Activated T-helper 2 cell treated with anti-CD3 and anti-CD28 coated beads, Interferon-gamma antibody, Interleukin-2, Interleukin-4, amounts not matched to agents 10 μg/mL and 5 μg/mL and 100 μg/mL, durations not matched to agents 14 hours and 24 hours and 36 hours (primary cell): ENCODE measurements at regions of chr1 and their contacts with region 1.

Region 1: DNA sequence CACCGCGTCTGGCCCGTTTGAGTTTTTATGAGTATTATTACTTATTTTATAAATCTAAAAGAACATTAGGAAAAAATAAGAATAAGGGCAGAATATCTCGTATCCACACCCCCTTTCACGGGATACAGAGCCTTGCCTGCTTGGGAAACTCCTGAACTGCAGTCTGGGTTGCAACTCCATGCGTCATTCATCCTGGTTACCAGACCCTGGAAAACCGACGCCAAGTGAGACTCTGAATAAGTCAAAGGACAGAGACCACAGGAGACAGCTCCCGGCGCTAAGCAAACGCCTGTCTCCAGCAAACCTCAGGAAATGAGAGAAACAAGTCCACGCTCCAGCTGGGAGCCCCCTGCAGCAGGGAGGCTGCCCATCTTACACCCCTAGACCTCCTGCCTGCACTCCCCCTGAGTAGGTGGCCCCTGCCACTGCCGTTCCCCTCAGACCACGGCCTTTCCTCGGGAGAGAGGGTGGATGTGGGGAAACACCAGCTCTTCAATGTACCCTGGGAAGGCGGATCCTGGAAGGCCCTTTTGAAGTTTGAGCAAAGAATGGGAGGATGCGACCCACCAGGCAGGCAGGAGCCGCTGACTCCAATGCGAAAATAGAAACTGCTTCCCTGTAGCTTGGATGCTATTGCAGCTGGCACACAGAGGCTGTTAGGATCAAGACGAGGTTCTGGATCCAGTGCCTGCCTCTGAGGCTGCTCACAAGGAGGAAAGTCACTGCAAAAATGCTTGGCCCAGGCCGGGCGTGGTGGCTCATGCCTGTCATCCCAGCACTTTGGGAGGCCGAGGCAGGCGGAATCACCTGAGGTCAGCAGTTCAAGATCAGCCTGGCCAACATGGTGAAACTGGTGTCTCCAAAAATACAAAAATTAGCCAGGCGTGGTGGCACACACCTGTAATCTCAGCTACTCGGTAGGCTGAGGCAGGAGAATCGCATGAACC is 37.7 kb upstream of the GPR157 start:
- DNase-seq: no peak
- H3K4me3 Mint-ChIP-seq: no peak overlapping the region
- H3K27ac Mint-ChIP-seq: no peak overlapping the region
- H3K4me1 Mint-ChIP-seq: peaks cover 18% of the 10 kb centered on the region
- H3K27me3 Mint-ChIP-seq: no peaks in the 10 kb centered on the region

Region 2: DNA sequence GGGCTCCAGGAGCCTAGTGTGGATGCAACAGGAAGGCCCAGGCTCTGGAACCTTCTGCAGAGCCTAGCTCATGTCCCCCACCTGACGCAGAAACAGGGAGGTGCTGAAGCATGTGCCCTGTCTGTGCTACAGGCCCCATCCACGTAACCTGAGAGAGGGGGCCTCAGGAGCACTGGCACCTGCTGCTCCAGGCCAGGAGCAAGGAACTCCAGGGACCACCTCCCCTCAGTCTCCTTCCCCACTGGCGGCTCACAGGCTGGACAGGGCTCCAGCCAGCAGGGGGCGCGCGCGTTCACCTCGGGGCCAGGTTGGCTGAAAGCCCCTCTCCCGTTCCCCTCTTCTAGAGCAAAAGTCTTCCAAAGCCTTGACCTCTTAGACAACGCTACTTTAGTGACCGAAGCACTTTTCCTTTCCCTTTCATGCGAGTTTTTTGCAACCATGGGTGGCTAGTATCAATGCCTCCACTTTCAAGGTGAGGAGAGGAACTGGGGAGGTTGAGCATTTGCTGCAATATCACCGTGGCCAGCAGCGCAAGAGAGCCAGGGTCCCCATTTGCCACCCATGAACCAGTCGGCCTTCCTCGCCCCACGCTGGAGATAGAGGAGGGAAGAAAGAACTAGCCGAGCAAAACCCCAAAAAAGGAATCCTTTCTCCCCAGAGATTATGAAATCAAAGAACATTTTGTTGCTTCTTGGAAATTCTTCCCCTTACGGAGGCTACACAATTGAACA is 14.8 kb after region 1 on chr1:
- intact Hi-C with region 1: loop called (anchors 1 kb)
- DNase-seq: peak; percentile 66
- H3K4me3 Mint-ChIP-seq: peak overlapping the region; percentile 88
- H3K27ac Mint-ChIP-seq: peak overlapping the region; percentile 80
- H3K4me1 Mint-ChIP-seq: peaks cover 17% of the 10 kb centered on the region
- H3K27me3 Mint-ChIP-seq: peaks cover 6% of the 10 kb centered on the region

Region 3: DNA sequence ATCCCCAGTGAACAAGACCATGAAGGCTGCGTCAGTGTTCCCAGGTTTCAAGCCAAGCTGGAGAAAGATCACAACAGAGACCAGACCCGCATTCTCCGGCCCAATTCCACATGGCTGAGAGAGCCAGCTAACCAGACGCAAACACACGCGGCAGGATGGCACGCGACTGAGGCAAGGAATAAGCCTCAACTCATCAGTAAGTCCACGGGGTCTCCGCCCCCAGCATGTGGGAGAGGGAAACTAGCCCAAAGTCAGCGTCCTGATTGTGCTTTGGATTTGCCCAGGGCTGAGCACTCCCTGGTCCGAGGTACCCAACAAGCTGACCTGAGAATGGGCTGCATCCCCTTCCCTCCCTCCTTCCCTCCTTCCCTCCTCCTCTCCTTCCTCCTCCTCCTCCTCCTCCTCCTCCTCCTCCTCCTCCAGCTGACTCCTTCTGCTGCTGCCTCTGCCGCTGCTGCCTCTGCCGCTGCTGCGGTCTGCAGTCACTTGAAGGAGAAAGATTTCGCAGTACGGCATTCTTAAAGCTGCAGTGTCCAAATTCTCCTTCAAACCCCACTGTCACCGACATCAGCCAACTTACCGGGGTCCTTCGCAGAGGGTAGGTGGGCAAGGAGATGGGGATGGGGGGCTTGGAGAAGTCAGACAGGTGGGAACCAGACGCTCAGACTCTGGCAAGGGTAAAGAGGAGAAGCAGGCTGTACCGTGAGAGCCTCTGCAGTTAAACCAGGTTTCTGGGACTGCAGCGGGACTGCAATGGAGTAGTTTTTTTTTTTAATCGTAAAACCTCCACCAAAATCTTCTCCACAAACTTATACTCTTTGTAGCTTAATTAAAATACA is 35.1 kb after region 1 on chr1:
- intact Hi-C with region 1: no loop called
- DNase-seq: no peak
- H3K4me3 Mint-ChIP-seq: peak overlapping the region; percentile 36
- H3K27ac Mint-ChIP-seq: no peak overlapping the region
- H3K4me1 Mint-ChIP-seq: peaks cover 41% of the 10 kb centered on the region
- H3K27me3 Mint-ChIP-seq: peaks cover 70% of the 10 kb centered on the region

Region 4: GRCh38 chr1:9292361-9293240 is 126.0 kb after region 1 on chr1 and contains the start of gene SPSB1:
- intact Hi-C with region 1: no loop called
- DNase-seq: peak; percentile 55
- H3K4me3 Mint-ChIP-seq: peak within 1 kb of the TSS; percentile 27
- H3K27ac Mint-ChIP-seq: no peak within 1 kb of the TSS
- H3K4me1 Mint-ChIP-seq: peaks cover 29% of the 10 kb centered on the region
- H3K27me3 Mint-ChIP-seq: no peaks in the 10 kb centered on the region
- total RNA-seq, gene SPSB1: 7.1 and 7.5 TPM in 2 replicates

Region 5: GRCh38 chr1:9438431-9439073 is 272.0 kb after region 1 on chr1:
- intact Hi-C with region 1: no loop called
- DNase-seq: no peak
- H3K4me3 Mint-ChIP-seq: no peak overlapping the region
- H3K27ac Mint-ChIP-seq: no peak overlapping the region
- H3K4me1 Mint-ChIP-seq: no peaks in the 10 kb centered on the region
- H3K27me3 Mint-ChIP-seq: peaks cover 20% of the 10 kb centered on the region